PC-9 (cell line): ENCODE measurements at regions of chr16 and their contacts with region 1.

Region 1: DNA sequence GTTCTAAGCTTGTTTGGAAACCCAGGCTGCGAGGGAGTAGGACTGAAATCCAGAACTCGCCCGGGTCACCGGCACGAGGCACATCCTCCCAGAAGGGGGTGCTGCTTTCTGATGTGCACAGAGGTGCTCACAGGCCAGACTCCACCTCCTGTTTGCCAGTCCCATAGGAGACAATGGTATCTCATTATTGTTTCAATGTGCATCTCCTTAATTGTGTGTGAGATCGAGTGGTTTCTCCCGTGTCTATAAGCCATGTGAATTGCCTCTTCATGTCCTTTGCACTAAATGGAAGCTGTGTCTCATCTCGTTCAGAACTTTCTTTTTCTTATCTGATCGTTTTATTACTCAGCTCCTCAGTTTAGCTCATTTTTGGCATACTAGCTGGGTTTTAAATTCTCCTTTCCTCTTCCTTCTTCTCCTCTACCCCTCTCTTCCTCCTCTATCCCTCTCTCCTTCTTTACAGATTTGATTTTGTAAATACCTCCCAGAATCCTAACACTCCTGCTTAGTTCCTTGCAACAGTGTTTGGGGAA is 32.1 kb upstream of the PRKCB start:
- DNase-seq: peak in 1 of 2 experiments; percentile 30
- H3K4me3 ChIP-seq: no peak overlapping the region
- H3K27ac ChIP-seq: no peak overlapping the region
- H3K4me1 ChIP-seq: 0 out of 2 replicates have a peak, but pooled peaks cover 4% of the 10 kb centered on the region
- H3K27me3 ChIP-seq: peaks cover 56% of the 10 kb centered on the region
- CTCF ChIP-seq: peak; percentile 41; the same call in 1 of the 2 replicates

Region 2: GRCh38 chr16:23739516-23739915 is 64.1 kb before region 1 on chr16:
- CTCF ChIA-PET with region 1: no interaction called
- POLR2A ChIA-PET with region 1: no interaction called
- intact Hi-C with region 1: no loop called
- DNase-seq: no peak
- H3K4me3 ChIP-seq: no peak overlapping the region
- H3K27ac ChIP-seq: no peak overlapping the region
- H3K4me1 ChIP-seq: no peaks in the 10 kb centered on the region
- H3K27me3 ChIP-seq: peaks cover 70% of the 10 kb centered on the region
- CTCF ChIP-seq: no peak

Region 3: DNA sequence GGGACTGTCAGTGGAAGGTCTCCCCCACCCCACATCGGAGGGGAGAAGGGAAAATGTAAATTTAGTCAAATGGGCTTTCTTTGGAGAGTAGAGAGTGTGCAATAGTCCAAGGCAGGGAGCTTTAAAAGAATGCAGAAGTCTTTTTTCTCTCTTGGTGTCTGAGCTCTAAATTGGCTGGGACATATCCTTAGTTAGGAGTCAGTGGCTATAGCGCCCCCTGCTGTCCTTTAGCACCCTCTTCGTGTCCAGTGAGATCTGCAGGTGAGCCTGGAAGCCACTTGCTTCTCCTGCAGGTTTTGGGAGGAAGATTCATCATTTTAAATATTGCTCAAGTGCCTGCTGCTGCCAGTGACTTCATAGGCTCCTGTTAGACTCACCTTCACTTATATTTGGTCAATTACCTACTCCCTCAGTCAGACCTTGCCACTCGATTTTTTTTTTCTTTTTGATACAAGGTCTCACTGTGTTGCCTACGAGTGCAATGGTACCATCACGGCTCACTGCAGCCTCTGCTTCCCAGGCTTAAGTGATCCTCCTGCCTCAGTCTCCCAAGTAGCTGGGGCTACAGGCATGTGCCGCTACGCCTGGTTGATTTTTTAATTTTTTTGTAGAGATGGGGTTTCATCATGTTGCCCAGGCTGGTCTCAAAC is 206.9 kb after region 1 on chr16:
- CTCF ChIA-PET with region 1: no interaction called
- POLR2A ChIA-PET with region 1: no interaction called
- intact Hi-C with region 1: loop called (anchors 5 kb)
- DNase-seq: peak in 1 of 2 experiments; percentile 38
- H3K4me3 ChIP-seq: no peak overlapping the region
- H3K27ac ChIP-seq: no peak overlapping the region
- H3K4me1 ChIP-seq: no peaks in the 10 kb centered on the region
- H3K27me3 ChIP-seq: peaks cover 17% of the 10 kb centered on the region; the same call in 1 of the 2 replicates
- CTCF ChIP-seq: peak; percentile 74